ENCODE measurements at regions of chr2 and their contacts with region 1.

Region 1: DNA sequence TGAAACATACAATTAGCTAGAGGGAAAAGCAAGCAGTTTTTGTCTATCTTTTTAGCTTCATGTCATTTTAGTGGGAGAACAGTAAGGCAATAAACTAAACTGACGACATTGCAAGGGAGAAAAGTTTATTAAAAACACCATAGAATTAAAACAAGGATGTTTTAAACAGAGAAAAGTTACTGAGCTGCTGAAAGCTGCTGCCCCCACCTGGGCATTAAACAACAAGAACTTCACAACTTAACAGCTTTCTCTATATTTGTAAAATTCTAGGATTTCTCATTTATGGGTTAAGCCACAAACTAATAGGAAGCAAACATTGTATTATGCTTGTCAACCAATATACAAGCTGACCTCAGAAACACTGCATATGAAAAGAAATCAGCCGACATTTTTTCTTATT is 289.2 kb downstream of the ERBB4 start:
- DNase-seq: peak; percentile 39
- ATAC-seq: no peak
- H3K4me3 ChIP-seq: no peak overlapping the region
- H3K27ac ChIP-seq: no peak overlapping the region
- H3K4me1 ChIP-seq: no peaks in the 10 kb centered on the region
- H3K27me3 ChIP-seq: no peaks in the 10 kb centered on the region
- CTCF ChIP-seq: peak; percentile 60
- POLR2A ChIP-seq: no peak
- RAD21 ChIP-seq: peak; percentile 66

Region 2: DNA sequence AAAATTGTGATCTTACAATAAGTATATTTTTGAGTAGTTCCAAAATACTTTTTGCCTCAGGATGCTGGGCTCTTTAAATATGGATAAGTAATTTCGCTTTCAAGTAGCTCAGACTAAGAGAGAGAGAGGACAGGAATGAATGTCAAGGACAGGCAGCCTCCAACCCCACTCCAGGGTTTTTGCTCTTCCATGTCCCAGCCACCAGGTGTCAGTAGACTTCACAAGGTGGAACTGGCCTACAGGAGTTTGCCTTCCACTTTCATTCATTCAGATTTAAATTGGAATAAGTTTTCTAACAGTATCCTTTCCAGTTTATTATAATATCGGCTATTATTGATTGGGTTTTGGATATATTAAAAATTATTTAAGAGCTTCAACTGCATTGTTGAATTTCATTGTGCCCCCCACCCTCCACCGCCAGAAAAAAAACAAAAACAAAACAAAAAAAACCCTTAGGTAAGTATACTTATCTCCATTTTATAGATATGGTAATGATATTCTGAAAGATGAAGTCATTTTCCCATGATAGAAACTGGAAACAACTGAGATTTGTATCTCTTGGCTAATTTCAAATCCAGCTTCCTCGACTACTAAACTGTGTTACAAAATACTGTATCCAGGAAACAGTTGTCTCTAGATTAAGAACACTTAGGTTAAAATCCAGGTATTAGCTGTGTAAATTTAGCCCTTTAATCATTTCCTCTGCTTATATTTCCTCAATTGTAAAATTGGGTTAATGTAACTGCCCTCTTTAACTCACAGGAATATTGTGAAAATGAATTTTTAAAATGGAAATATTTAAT is 504.0 kb before region 1 on chr2:
- CTCF ChIA-PET with region 1: no interaction called
- POLR2A ChIA-PET with region 1: no interaction called
- dilution Hi-C with region 1: no loop called
- in situ Hi-C with region 1: no loop called
- intact Hi-C with region 1: loop called (anchors 1 kb)
- DNase-seq: peak; percentile 49
- ATAC-seq: peak; percentile 85
- H3K4me3 ChIP-seq: no peak overlapping the region
- H3K27ac ChIP-seq: no peak overlapping the region
- H3K4me1 ChIP-seq: no peaks in the 10 kb centered on the region
- H3K27me3 ChIP-seq: no peaks in the 10 kb centered on the region
- CTCF ChIP-seq: peak; percentile 90
- POLR2A ChIP-seq: no peak
- RAD21 ChIP-seq: peak; percentile 93

Region 3: GRCh38 chr2:211879323-211879722 is 370.1 kb before region 1 on chr2:
- CTCF ChIA-PET with region 1: interaction called, 4 read pairs
- POLR2A ChIA-PET with region 1: no interaction called
- dilution Hi-C with region 1: no loop called
- in situ Hi-C with region 1: no loop called
- intact Hi-C with region 1: loop called (anchors 2 kb)
- DNase-seq: peak; percentile 12
- ATAC-seq: peak; percentile 69; the same call in 1 of the 2 replicates
- H3K4me3 ChIP-seq: no peak overlapping the region
- H3K27ac ChIP-seq: no peak overlapping the region
- H3K4me1 ChIP-seq: no peaks in the 10 kb centered on the region
- H3K27me3 ChIP-seq: no peaks in the 10 kb centered on the region
- CTCF ChIP-seq: peak; percentile 41
- POLR2A ChIP-seq: no peak
- RAD21 ChIP-seq: peak; percentile 54

Region 4: GRCh38 chr2:212005085-212005671 is 244.3 kb before region 1 on chr2:
- CTCF ChIA-PET with region 1: no interaction called
- POLR2A ChIA-PET with region 1: no interaction called
- dilution Hi-C with region 1: no loop called
- in situ Hi-C with region 1: no loop called
- intact Hi-C with region 1: loop called (anchors 5 kb)
- DNase-seq: peak; percentile 33
- ATAC-seq: peak; percentile 65
- H3K4me3 ChIP-seq: no peak overlapping the region
- H3K27ac ChIP-seq: no peak overlapping the region
- H3K4me1 ChIP-seq: no peaks in the 10 kb centered on the region
- H3K27me3 ChIP-seq: no peaks in the 10 kb centered on the region
- CTCF ChIP-seq: peak; percentile 50
- POLR2A ChIP-seq: no peak
- RAD21 ChIP-seq: peak; percentile 47

Measured in IMR-90 (cell line).